HCT116 (cell line): ENCODE measurements at regions of chr2 and their contacts with region 1.

Region 1: GRCh38 chr2:218852911-218853667 is 6.5 kb upstream of the WNT6 start:
- DNase-seq: peak; percentile 77
- ATAC-seq: peak; percentile 71
- H3K4me3 ChIP-seq: no peak overlapping the region
- H3K27ac ChIP-seq: no peak overlapping the region
- H3K4me1 ChIP-seq: peaks cover 32 to 57% of the 10 kb centered on the region in 2 experiments
- H3K27me3 ChIP-seq: no peaks in the 10 kb centered on the region
- CTCF ChIP-seq: peak in 2 of 3 experiments; percentile 74 to 85; a peak in 4 of 6 replicates
- POLR2A ChIP-seq: no peak
- RAD21 ChIP-seq: no peak

Region 2: DNA sequence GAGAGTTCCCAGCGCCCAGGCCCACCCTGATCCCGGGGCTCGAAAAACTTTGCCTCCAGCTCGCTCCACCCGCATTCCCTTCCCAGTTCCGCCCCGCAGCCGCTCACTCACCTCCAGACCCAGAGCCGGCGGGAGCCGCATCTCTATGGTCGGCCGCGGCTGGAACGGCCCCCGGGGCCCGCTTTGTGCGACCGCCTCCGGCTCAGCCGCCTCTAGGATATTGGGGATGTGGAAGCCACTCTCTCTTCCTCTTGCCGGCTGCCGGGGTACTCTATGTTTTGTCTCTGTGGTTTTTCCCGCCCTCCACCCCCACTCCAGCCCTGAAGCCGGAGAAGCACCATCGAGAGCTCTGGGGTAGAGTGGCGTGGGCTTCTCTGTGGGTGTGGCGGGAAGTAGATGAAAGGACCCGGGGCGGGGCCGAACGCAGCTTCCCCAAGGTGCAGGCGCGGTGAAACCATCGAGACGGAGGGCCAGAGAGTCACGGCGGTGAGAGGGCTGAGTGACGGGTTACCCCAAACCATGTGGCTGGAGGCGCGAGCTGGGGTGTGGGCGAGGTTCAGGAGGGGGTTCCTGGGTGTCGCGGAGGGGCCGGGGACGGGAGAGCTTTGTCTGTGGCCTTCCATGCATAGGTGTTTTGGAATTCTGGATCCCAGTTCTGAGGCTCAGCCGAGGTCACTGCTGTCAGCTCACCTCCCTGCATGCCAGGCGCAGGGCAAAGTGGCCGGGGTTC is 193.7 kb before region 1 on chr2 and contains the starts of genes BCS1L and ZNF142:
- CTCF ChIA-PET with region 1: interaction called, 71 read pairs
- POLR2A ChIA-PET with region 1: no interaction called
- RAD21 ChIA-PET with region 1: interaction called in 1 of 2 experiments, 3 read pairs
- intact Hi-C with region 1: no loop called
- DNase-seq: peak; percentile 81
- ATAC-seq: peak; percentile 89
- H3K4me3 ChIP-seq: peak within 1 kb of the TSS; percentile 88 to 96
- H3K27ac ChIP-seq: peak within 1 kb of the TSS; percentile 70
- H3K4me1 ChIP-seq: peaks cover 0 to 19% of the 10 kb centered on the region in 2 experiments; a peak in 2 of 4 replicates
- H3K27me3 ChIP-seq: no peaks in the 10 kb centered on the region
- CTCF ChIP-seq: no peak
- POLR2A ChIP-seq: peak; percentile 57
- RAD21 ChIP-seq: no peak
- total RNA-seq, gene BCS1L: 57.4 TPM
- total RNA-seq, gene ZNF142: 29.2 TPM

Region 3: DNA sequence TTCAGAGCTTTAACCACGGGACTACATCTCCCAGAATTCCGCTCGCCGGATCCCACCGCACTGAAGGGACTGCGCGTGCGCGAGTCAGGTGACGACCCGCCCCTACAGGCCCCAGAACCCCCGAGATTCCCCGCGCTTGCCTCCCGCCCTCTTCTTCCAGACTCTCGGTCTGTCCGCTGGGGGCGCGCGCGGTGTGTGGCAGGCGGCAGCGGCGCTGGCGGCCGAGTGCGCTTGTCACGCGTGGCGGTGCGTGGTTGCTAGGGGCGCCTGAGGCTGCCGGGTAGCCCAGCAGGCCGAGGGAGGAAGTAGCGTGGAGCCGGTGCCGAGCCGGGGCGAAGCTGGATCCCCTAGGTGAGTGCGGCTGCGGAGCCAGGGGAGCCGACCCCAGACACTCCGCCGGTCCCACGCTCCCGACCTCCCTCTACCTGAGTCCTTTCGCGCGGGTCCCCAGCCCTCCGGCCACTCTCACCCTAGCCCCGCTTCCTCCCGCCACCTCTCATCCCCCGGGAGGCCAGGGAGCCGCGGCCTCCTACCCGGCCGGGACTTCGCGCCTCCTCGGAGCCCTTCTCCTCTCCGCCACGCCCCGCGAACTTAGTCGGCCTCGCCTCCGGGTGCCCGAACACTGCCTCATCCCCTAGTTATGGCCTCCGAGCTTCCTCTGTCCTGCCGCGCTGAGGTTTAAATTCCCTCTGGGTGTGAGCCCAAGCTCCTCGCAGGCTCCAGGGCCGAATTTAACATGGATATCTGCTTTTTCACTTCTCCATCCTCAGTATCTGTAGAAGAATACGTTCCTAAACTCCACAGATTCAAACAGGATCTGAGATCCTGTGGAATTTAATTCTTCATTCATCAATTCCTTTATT is 142.2 kb before region 1 on chr2 and contains the start of gene TTLL4:
- CTCF ChIA-PET with region 1: interaction called, 11 read pairs
- POLR2A ChIA-PET with region 1: no interaction called
- RAD21 ChIA-PET with region 1: no interaction called
- intact Hi-C with region 1: no loop called
- DNase-seq: peak; percentile 87
- ATAC-seq: peak; percentile 97
- H3K4me3 ChIP-seq: peak within 1 kb of the TSS; percentile 73 to 79
- H3K27ac ChIP-seq: peak within 1 kb of the TSS; percentile 84
- H3K4me1 ChIP-seq: peaks cover 0 to 11% of the 10 kb centered on the region in 2 experiments; a peak in 2 of 4 replicates
- H3K27me3 ChIP-seq: no peaks in the 10 kb centered on the region
- CTCF ChIP-seq: peak; percentile 75 to 88 (median 76)
- POLR2A ChIP-seq: peak; percentile 65
- RAD21 ChIP-seq: peak; percentile 76
- total RNA-seq, gene TTLL4: 53.0 TPM

Region 4: GRCh38 chr2:218898109-218898878 is 45.2 kb after region 1 on chr2:
- CTCF ChIA-PET with region 1: interaction called, 35 read pairs
- POLR2A ChIA-PET with region 1: interaction called, 3 read pairs
- RAD21 ChIA-PET with region 1: interaction called, 5 read pairs
- intact Hi-C with region 1: loop called (anchors 1 kb)
- DNase-seq: no peak
- ATAC-seq: peak; percentile 53
- H3K4me3 ChIP-seq: peak overlapping the region; percentile 42 to 76
- H3K27ac ChIP-seq: no peak overlapping the region
- H3K4me1 ChIP-seq: peaks cover 51 to 62% of the 10 kb centered on the region in 2 experiments
- H3K27me3 ChIP-seq: no peaks in the 10 kb centered on the region
- CTCF ChIP-seq: peak in 2 of 3 experiments; percentile 90 to 94; a peak in 4 of 6 replicates
- POLR2A ChIP-seq: no peak
- RAD21 ChIP-seq: no peak

Region 5: GRCh38 chr2:219002395-219003266 is 149.5 kb after region 1 on chr2:
- CTCF ChIA-PET with region 1: interaction called, 7 read pairs
- POLR2A ChIA-PET with region 1: interaction called, 8 read pairs
- RAD21 ChIA-PET with region 1: no interaction called
- intact Hi-C with region 1: loop called (anchors 1 kb)
- DNase-seq: peak; percentile 60
- ATAC-seq: peak; percentile 83
- H3K4me3 ChIP-seq: peak overlapping the region; percentile 56 to 68
- H3K27ac ChIP-seq: peak overlapping the region; percentile 51
- H3K4me1 ChIP-seq: peaks cover 9 to 35% of the 10 kb centered on the region in 2 experiments; a peak in 3 of 4 replicates
- H3K27me3 ChIP-seq: no peaks in the 10 kb centered on the region
- CTCF ChIP-seq: peak in 2 of 3 experiments; percentile 67 to 71; a peak in 4 of 6 replicates
- POLR2A ChIP-seq: no peak
- RAD21 ChIP-seq: no peak

Region 6: GRCh38 chr2:219041252-219041651 is 188.2 kb after region 1 on chr2 and contains the start of gene CFAP65:
- CTCF ChIA-PET with region 1: no interaction called
- POLR2A ChIA-PET with region 1: no interaction called
- RAD21 ChIA-PET with region 1: no interaction called
- intact Hi-C with region 1: no loop called
- DNase-seq: peak; percentile 34
- ATAC-seq: peak; percentile 79
- H3K4me3 ChIP-seq: peak within 1 kb of the TSS; percentile 43 to 47
- H3K27ac ChIP-seq: no peak within 1 kb of the TSS
- H3K4me1 ChIP-seq: no peaks in the 10 kb centered on the region
- H3K27me3 ChIP-seq: peaks cover 24% of the 10 kb centered on the region
- CTCF ChIP-seq: no peak
- POLR2A ChIP-seq: no peak
- RAD21 ChIP-seq: no peak
- total RNA-seq, gene CFAP65: 0.52 TPM

Region 7: GRCh38 chr2:219155054-219155644 is 302.1 kb after region 1 on chr2:
- CTCF ChIA-PET with region 1: interaction called, 12 read pairs
- POLR2A ChIA-PET with region 1: no interaction called
- RAD21 ChIA-PET with region 1: no interaction called
- intact Hi-C with region 1: loop called (anchors 2 kb)
- DNase-seq: peak; percentile 78
- ATAC-seq: peak; percentile 72
- H3K4me3 ChIP-seq: no peak overlapping the region
- H3K27ac ChIP-seq: no peak overlapping the region
- H3K4me1 ChIP-seq: peaks cover 0 to 6% of the 10 kb centered on the region in 2 experiments; a peak in 2 of 4 replicates
- H3K27me3 ChIP-seq: no peaks in the 10 kb centered on the region
- CTCF ChIP-seq: peak; percentile 25 to 93 (median 53)
- POLR2A ChIP-seq: no peak
- RAD21 ChIP-seq: peak; percentile 94